Endothelial cell of umbilical vein (primary cell): ENCODE measurements at regions of chr17 and their contacts with region 1.

Region 1: GRCh38 chr17:42819944-42820535 is 4.0 kb downstream of the BECN1 start:
- DNase-seq: peak; percentile 60
- H3K4me3 ChIP-seq: no peak overlapping the region
- H3K27ac ChIP-seq: no peak overlapping the region
- H3K4me1 ChIP-seq: peaks cover 14% of the 10 kb centered on the region
- H3K27me3 ChIP-seq: no peaks in the 10 kb centered on the region
- CTCF ChIP-seq: peak; percentile 81 to 90
- POLR2A ChIP-seq: no peak

Region 2: GRCh38 chr17:42609182-42609813 is 210.7 kb before region 1 on chr17 and contains the starts of genes RETREG3 and TUBG1:
- CTCF ChIA-PET with region 1: interaction called, 3 read pairs
- POLR2A ChIA-PET with region 1: no interaction called
- dilution Hi-C with region 1: loop called (anchors 10 kb)
- intact Hi-C with region 1: loop called (anchors 2 kb)
- DNase-seq: peak; percentile 99
- H3K4me3 ChIP-seq: peak within 1 kb of the TSS; percentile 73 to 81 (median 79)
- H3K27ac ChIP-seq: peak within 1 kb of the TSS; percentile 69
- H3K4me1 ChIP-seq: peaks cover 11% of the 10 kb centered on the region
- H3K27me3 ChIP-seq: no peaks in the 10 kb centered on the region
- CTCF ChIP-seq: peak; percentile 39 to 72
- POLR2A ChIP-seq: peak; percentile 89
- total RNA-seq, gene RETREG3: 52.3 and 53.4 TPM in 2 replicates
- total RNA-seq, gene TUBG1: 96.9 and 102 TPM in 2 replicates

Region 3: DNA sequence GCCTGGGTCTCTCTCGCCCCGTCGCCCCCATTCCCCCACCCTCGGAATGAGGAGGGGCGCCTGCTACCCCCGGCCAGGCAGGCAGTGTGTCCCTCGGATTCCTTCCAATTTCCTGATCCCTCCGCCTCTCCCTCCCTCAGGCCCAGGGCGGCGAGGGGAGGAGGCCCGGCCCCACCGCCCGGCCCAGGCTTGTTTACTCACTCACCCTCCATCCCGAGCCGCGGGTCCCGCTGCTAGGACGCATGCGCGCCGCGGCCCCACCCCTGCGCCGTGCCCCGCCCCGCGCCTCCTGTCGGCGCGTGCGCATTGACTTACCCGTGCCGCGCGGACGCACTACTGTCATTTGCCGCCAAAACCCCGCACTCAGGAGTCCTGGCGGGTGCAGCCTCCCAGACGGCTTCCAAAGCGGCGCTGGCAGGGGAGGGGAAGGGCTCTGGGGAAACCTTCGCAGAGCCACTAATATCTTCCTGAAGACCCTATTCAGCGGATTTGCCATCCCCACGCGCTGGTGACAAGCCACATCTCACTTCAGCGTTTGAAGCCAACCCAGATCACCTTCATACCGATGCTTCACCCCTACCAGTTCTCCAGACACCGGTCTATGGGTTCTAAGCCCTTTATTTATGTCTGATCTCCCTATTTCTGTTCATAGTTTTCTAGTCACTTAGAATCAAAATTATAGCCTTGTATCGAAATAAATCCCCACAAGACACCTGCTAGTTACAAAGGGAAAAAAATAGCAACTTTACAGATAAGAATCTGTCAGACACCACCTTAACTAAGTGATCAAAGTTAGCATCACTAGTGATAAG is 75.0 kb before region 1 on chr17 and contains the start of gene EZH1:
- CTCF ChIA-PET with region 1: interaction called, 6 read pairs
- POLR2A ChIA-PET with region 1: no interaction called
- dilution Hi-C with region 1: no loop called
- intact Hi-C with region 1: loop called (anchors 5 kb)
- DNase-seq: peak; percentile 96
- H3K4me3 ChIP-seq: peak within 1 kb of the TSS; percentile 43 to 72 (median 53)
- H3K27ac ChIP-seq: peak within 1 kb of the TSS; percentile 65
- H3K4me1 ChIP-seq: peaks cover 10% of the 10 kb centered on the region
- H3K27me3 ChIP-seq: no peaks in the 10 kb centered on the region
- CTCF ChIP-seq: no peak
- POLR2A ChIP-seq: peak; percentile 58
- total RNA-seq, gene EZH1: 29.8 and 31.4 TPM in 2 replicates

Region 4: DNA sequence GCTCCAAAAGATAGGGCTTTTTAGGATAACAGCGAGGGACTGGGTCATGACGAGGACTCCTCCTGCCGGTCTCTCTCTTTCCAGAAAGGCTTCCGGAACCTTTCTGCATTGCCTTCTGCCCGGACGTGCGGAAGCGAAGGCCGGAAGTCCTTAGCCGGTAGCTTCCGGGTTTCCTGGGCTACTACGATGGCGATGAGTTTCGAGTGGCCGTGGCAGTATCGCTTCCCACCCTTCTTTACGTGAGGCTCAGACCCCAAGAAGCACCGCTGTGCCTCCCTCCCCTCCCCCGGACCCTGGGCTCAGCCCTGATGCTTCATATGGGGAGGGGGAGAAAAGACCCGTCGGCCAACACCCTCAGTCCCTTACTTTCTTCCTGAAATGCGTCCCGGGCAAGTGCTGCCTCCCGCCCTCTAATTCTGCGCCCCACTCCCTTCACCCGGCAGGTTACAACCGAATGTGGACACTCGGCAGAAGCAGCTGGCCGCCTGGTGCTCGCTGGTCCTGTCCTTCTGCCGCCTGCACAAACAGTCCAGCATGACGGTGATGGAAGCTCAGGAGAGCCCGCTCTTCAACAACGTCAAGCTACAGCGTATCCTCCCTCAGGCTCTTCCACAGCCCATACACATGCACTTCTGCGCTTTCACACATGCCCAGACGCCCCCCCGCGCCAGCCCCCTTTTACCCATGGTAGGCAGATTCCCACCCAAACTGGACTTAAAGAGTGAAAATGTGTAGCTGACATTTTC is 46.6 kb before region 1 on chr17 and contains the start of gene VPS25:
- CTCF ChIA-PET with region 1: interaction called, 21 read pairs
- POLR2A ChIA-PET with region 1: no interaction called
- dilution Hi-C with region 1: no loop called
- intact Hi-C with region 1: no loop called
- DNase-seq: peak; percentile 61
- H3K4me3 ChIP-seq: peak within 1 kb of the TSS; percentile 15 to 71 (median 68)
- H3K27ac ChIP-seq: peak within 1 kb of the TSS; percentile 73
- H3K4me1 ChIP-seq: peaks cover 26% of the 10 kb centered on the region
- H3K27me3 ChIP-seq: no peaks in the 10 kb centered on the region
- CTCF ChIP-seq: peak in 1 of 2 donors; percentile 3
- POLR2A ChIP-seq: peak; percentile 93
- total RNA-seq, gene VPS25: 45.0 and 47.1 TPM in 2 replicates

Region 5: DNA sequence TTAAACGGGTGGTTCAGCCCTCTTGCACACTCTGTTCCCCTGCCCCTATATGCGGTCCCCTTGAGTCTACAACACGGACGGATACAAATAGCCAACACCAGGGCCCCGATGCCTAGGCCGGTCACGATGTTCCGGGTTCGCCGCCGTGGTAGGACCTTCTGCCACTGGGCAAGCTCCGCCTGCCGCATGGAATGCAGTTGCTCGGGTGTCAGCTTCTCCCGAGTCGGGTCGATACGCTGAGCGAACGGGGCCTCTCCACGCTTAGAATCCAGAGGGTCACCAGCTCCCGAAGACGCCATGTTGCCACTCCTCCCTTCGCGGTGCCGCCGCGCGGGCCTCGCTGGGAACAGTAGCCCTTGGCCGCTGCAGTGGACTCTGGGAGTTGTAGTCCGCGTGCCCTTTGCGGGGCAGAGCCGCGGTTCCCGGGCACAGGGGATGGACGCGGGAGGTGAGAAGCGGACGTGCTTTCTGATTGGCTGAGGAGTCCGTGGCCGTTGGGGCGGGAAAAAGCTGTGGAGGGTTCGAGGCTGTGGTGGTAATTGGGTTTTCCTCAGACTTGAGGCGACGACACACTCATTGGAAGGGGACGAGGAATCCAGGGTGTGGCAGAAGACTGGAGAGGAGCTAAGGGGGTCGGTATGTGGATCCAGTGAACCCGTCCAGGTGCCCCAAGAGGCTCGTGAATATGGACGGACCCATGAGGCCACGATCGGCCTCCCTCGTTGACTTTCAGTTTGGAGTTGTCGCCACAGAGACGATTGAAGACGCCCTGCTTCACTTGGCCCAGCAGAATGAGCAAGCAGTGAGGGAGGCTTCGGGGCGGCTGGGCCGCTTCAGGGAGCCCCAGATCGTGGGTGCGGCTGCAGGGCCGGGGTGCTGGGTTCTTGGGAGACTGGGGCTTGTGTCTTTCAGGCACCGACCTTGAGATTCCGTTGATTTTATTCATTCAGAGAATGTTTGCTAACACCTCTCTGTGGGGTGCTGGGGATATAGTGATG is 21.4 kb before region 1 on chr17 and contains the starts of genes CNTD1 and COA3:
- CTCF ChIA-PET with region 1: interaction called, 15 read pairs
- POLR2A ChIA-PET with region 1: interaction called, 3 read pairs
- dilution Hi-C with region 1: no loop called
- intact Hi-C with region 1: no loop called
- DNase-seq: peak; percentile 89
- H3K4me3 ChIP-seq: peak within 1 kb of the TSS; percentile 16 to 76 (median 71)
- H3K27ac ChIP-seq: no peak within 1 kb of the TSS
- H3K4me1 ChIP-seq: peaks cover 11% of the 10 kb centered on the region
- H3K27me3 ChIP-seq: no peaks in the 10 kb centered on the region
- CTCF ChIP-seq: no peak
- POLR2A ChIP-seq: peak; percentile 84
- total RNA-seq, gene CNTD1: not detected in 2 replicates
- total RNA-seq, gene COA3: 56.6 and 57.5 TPM in 2 replicates

Region 6: GRCh38 chr17:42928714-42929496 is 108.9 kb after region 1 on chr17:
- CTCF ChIA-PET with region 1: interaction called, 10 read pairs
- POLR2A ChIA-PET with region 1: no interaction called
- dilution Hi-C with region 1: no loop called
- intact Hi-C with region 1: no loop called
- DNase-seq: peak; percentile 81
- H3K4me3 ChIP-seq: no peak overlapping the region
- H3K27ac ChIP-seq: peak overlapping the region; percentile 23
- H3K4me1 ChIP-seq: peaks cover 9% of the 10 kb centered on the region
- H3K27me3 ChIP-seq: peaks cover 0 to 3% of the 10 kb centered on the region in 2 experiments
- CTCF ChIP-seq: peak; percentile 53 to 57
- POLR2A ChIP-seq: no peak